Prostate gland (tissue), 2 donors: ENCODE measurements at regions of chr12 and their contacts with region 1.

Region 1: GRCh38 chr12:2284857-2285256 is 232.1 kb downstream of the CACNA1C start:
- DNase-seq: peak; percentile 60
- H3K4me3 ChIP-seq: no peak overlapping the region
- H3K27ac ChIP-seq: peak overlapping the region in 1 of 2 donors; percentile 1
- H3K4me1 ChIP-seq: peaks cover 10% of the 10 kb centered on the region
- H3K27me3 ChIP-seq: no peaks in the 10 kb centered on the region
- CTCF ChIP-seq: peak in 3 of 4 experiments; percentile 40 to 70 (median 62)
- POLR2A ChIP-seq: no peak

Region 2: GRCh38 chr12:2387103-2387834 is 102.4 kb after region 1 on chr12:
- intact Hi-C with region 1: loop called (anchors 2 kb)
- DNase-seq: no peak
- H3K4me3 ChIP-seq: no peak overlapping the region
- H3K27ac ChIP-seq: no peak overlapping the region
- H3K4me1 ChIP-seq: no peaks in the 10 kb centered on the region
- H3K27me3 ChIP-seq: no peaks in the 10 kb centered on the region
- CTCF ChIP-seq: no peak
- POLR2A ChIP-seq: no peak